Dorsolateral prefrontal cortex (tissue), 120 donors: ENCODE measurements at regions of chr13 and their contacts with region 1.

Region 1: GRCh38 chr13:83810136-83810535 is 72.1 kb downstream of the SLITRK1 start:
- DNase-seq: no peak
- H3K4me3 ChIP-seq: peak overlapping the region in 22 of 59 donors; percentile 2 to 33 (median 13)
- H3K27ac ChIP-seq: peak overlapping the region in 56 of 59 donors; percentile 13 to 93 (median 84)
- H3K27me3 ChIP-seq: no peaks in the 10 kb centered on the region
- CTCF ChIP-seq: peak in 1 of 56 donors; percentile 14

Region 2: GRCh38 chr13:83773961-83774360 is 36.2 kb before region 1 on chr13:
- intact Hi-C with region 1: loop called in 1 of 2 experiments (anchors 5 kb)
- DNase-seq: no peak
- H3K4me3 ChIP-seq: peak overlapping the region in 4 of 59 donors; percentile 3 to 6 (median 6)
- H3K27ac ChIP-seq: peak overlapping the region in 42 of 59 donors; percentile 0 to 78 (median 40)
- H3K27me3 ChIP-seq: no peaks in the 10 kb centered on the region
- CTCF ChIP-seq: no peak

Region 3: GRCh38 chr13:84417426-84417825 is 607.3 kb after region 1 on chr13:
- intact Hi-C with region 1: no loop called
- DNase-seq: no peak
- H3K4me3 ChIP-seq: no peak overlapping the region
- H3K27ac ChIP-seq: no peak overlapping the region
- H3K27me3 ChIP-seq: no peaks in the 10 kb centered on the region
- CTCF ChIP-seq: no peak